Dendritic cell treated with granulocyte-macrophage colony-stimulating factor and Interleukin-4, amounts not matched to agents 40 ng/mL and 50 ng/mL, for 4 days (primary cell): ENCODE measurements at regions of chr3 and their contacts with region 1.

Region 1: DNA sequence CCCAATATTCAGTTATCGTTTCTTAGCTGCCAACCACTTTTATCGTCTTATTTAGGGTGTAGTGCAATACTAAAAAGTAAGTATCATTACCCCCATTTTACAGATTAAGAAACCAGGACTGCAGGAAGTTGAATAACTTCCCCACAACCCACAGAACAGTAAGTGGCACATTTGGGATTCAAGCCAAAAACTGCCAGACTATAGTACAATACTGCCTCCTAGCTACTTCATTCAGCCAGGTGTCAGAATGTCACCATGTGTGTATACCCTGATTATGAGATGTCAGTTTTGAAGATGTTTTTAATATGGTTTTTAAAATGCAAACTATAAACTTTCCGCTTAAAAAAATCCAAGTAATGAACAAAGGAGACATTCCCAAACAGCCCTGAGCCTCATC is 74.2 kb upstream of the PROK2 start:
- H3K4me3 Mint-ChIP-seq: no peak overlapping the region
- H3K27ac Mint-ChIP-seq: no peak overlapping the region
- H3K4me1 Mint-ChIP-seq: peaks cover 21% of the 10 kb centered on the region
- H3K27me3 Mint-ChIP-seq: peaks cover 27% of the 10 kb centered on the region

Region 2: DNA sequence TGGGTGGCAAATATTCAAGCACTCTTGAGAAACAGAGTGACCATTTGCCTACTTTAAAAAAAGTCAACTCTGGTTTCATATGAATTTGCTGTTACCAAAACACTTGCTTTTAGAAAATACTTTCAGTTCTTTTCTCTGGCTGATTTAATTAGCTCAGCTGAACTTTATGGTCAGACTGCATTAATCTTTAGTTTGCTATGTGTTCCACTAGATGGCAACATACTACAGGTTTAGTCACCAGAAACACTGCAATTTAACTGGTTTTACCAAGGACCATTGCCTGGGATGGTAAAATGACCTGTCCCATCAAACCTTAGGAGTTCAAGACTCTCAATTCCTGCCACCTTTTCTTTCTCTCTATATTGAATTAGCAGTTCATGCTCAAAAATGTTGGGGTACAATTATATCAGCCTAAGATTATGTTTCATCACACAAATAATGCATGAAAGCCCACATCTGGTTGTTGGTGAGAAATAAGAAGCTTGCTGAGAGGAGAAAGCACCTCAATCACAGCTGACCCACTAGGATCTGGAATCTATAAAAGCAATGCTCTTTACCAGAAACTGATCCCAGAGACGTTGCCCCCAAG is 148.1 kb before region 1 on chr3:
- intact Hi-C with region 1: loop called (anchors 1 kb)
- H3K4me3 Mint-ChIP-seq: no peak overlapping the region
- H3K27ac Mint-ChIP-seq: no peak overlapping the region
- H3K4me1 Mint-ChIP-seq: peaks cover 24% of the 10 kb centered on the region
- H3K27me3 Mint-ChIP-seq: no peaks in the 10 kb centered on the region

Region 3: GRCh38 chr3:71725279-71725991 is 133.7 kb before region 1 on chr3 and contains the start of gene EIF4E3:
- intact Hi-C with region 1: loop called (anchors 2 kb)
- H3K4me3 Mint-ChIP-seq: peak within 1 kb of the TSS; percentile 80
- H3K27ac Mint-ChIP-seq: peak within 1 kb of the TSS; percentile 68
- H3K4me1 Mint-ChIP-seq: peaks cover 60% of the 10 kb centered on the region
- H3K27me3 Mint-ChIP-seq: peaks cover 4% of the 10 kb centered on the region

Region 4: DNA sequence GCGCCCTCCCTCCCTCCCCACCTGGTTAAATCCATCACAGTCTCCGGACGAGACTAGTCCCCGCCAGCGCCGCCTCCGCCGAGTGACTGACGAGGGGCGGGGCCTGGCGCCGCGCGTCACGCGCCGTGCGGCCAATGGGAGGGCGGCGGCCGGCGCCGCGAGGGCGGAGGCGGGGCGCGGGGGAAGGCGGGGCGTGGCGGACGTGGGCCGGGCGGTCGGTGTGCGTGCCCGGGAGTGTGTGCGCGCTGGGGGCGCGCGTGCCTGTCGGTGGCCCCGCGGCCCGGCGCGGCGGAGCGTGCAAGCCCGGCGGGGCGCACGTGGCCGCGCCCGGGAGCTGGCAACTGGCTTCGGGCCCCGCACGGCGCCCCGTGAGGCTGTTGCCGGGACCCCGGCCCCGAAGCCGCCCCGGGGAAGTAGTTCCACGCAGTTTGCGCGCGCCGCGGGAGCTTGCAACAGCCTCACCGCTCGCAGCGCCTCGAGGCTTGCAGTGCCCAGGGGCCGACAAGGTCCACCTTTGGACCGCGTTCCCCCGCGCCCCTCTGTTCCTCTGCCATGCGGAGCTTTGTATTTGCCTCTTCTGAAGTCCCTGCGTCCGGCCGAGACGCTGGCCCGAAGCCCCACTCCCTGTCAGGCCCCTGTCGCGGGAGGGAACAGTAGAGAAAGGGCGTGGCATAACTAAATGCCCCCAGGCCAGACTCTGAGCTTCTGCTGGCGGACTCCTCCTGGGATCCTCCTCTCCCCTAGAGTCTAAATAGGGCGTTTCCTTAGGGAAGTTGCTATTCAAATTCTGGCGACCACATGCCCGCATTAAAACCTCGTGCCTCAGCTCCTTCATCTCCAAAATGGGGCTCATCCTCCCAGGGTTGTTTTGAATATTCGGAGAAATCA is 588.2 kb after region 1 on chr3:
- intact Hi-C with region 1: no loop called
- H3K4me3 Mint-ChIP-seq: peak overlapping the region; percentile 83
- H3K27ac Mint-ChIP-seq: peak overlapping the region; percentile 74
- H3K4me1 Mint-ChIP-seq: peaks cover 53% of the 10 kb centered on the region
- H3K27me3 Mint-ChIP-seq: peaks cover 12% of the 10 kb centered on the region